ENCODE measurements at regions of chr17 and their contacts with region 1.

Region 1: GRCh38 chr17:38454516-38454915 is 26.3 kb downstream of the ARHGAP23 start:
- DNase-seq: peak; percentile 84
- H3K4me3 ChIP-seq: peak overlapping the region; percentile 51 to 64; a peak in 3 of 4 replicates
- H3K27ac ChIP-seq: peak overlapping the region; percentile 71 to 80
- H3K4me1 ChIP-seq: peaks cover 48 to 53% of the 10 kb centered on the region in 2 experiments; a peak in 3 of 4 replicates
- H3K27me3 ChIP-seq: no peaks in the 10 kb centered on the region
- CTCF ChIP-seq: no peak
- EP300 ChIP-seq: peak; percentile 47 to 50; a peak in 2 of 4 replicates
- RAD21 ChIP-seq: no peak

Region 2: GRCh38 chr17:38421871-38422827 is 32.4 kb before region 1 on chr17:
- CTCF ChIA-PET with region 1: interaction called, 14 read pairs
- POLR2A ChIA-PET with region 1: no interaction called
- DNase-seq: no peak
- H3K4me3 ChIP-seq: no peak overlapping the region
- H3K27ac ChIP-seq: no peak overlapping the region
- H3K4me1 ChIP-seq: peaks cover 22 to 51% of the 10 kb centered on the region in 2 experiments; a peak in 2 of 4 replicates
- H3K27me3 ChIP-seq: no peaks in the 10 kb centered on the region
- CTCF ChIP-seq: no peak
- EP300 ChIP-seq: no peak
- RAD21 ChIP-seq: no peak

Region 3: GRCh38 chr17:38464723-38465390 is 10.3 kb after region 1 on chr17:
- CTCF ChIA-PET with region 1: interaction called, 12 read pairs
- POLR2A ChIA-PET with region 1: interaction called, 7 read pairs
- DNase-seq: peak; percentile 96
- H3K4me3 ChIP-seq: peak overlapping the region; percentile 38 to 64
- H3K27ac ChIP-seq: peak overlapping the region; percentile 84 to 96
- H3K4me1 ChIP-seq: peaks cover 9 to 28% of the 10 kb centered on the region in 2 experiments; a peak in 3 of 4 replicates
- H3K27me3 ChIP-seq: no peaks in the 10 kb centered on the region
- CTCF ChIP-seq: no peak
- EP300 ChIP-seq: peak; percentile 13 to 29; a peak in 1 of 4 replicates
- RAD21 ChIP-seq: no peak